Activated naive CD4-positive, alpha-beta T cell treated with anti-CD3 and anti-CD28 coated beads for 36 hours (primary cell): ENCODE measurements at regions of chr7 and their contacts with region 1.

Region 1: DNA sequence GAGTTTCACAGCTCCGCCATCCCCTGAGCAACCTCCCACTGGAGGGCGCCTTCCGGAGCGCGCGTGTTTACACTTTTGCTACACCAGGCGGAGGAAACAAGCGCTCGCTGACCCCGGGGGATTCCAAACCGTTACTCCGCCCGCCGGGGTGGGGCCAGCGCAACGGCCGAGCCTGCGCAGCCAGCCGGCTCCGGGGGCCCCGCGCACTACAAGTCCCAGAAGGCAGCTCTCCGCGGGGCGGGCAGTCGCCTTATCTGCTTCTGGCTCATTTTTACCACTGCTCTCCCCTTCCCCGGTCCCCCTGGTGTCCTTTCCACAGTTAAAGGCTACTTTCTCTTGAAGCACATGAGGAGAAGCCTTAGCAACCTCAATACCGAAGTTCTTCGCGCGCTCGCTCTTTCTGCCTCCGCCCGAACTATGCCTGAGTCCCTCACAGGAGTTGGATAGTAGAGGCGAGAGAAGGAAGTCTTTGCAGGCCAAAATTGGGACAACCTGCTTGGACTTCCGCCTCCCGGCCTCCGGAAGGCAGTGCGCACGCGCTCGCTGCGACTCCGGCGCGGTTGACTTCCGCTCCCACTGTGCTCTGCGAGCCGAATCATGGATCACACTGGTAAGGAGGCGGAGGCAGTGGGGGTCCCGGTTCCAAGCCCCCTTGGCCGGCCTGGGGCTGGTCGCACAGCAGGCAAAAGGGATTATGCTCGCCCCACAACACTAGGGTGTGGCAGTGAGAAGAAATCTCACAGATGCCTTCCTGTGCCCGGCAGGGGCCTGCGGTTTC is at the start of gene CBLL1:
- DNase-seq: peak; percentile 98
- H3K4me3 Mint-ChIP-seq: peak within 1 kb of the TSS; percentile 96
- H3K27ac Mint-ChIP-seq: peak within 1 kb of the TSS; percentile 100
- H3K4me1 Mint-ChIP-seq: peaks cover 42% of the 10 kb centered on the region
- H3K27me3 Mint-ChIP-seq: no peaks in the 10 kb centered on the region
- total RNA-seq, gene CBLL1: 31.6 to 32.1 TPM

Region 2: DNA sequence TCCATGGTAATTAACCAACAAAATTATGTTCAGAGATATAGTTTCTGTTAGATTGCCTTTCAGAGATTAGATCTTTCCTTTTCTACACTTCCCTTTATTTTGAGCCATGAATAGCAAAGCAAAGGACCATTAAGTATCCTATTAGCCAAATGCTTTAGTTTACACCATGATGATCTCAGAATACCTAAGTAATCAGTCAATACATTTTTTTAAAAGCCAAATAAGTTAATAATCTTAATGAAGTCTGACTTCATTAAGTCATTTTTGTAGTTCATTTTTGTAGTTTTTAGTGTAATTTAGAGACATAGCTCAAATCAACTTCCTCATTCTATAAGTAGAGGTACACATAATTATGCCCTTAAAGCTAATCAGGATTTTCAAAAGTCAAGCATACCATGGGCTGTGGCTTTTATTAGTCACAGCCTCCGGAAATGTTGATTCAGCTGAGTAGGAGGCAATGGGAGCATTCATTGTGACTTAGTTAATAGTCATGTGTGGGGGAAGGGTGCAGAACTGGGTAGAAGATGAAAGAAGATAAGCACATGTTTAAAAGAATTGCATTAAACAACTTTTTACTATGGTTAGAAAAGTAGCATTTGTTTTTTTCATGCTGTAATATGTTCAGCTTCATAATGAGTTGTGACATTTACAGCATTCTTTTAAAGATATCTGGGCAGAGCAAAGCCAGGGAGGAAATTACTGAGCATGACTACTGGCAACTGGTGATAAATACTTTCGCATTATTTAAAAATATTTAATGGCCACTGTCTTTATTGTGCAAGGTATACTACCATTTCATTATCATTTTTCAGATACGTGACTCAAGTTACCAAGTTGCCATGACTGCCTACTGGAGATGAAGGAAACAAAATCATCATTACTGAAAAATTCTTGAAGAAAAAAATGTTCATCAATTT is 1025.5 kb before region 1 on chr7:
- CTCF ChIA-PET with region 1: no interaction called
- intact Hi-C with region 1: loop called (anchors 1 kb)
- DNase-seq: peak; percentile 92
- H3K4me3 Mint-ChIP-seq: no peak overlapping the region
- H3K27ac Mint-ChIP-seq: no peak overlapping the region
- H3K4me1 Mint-ChIP-seq: peaks cover 10% of the 10 kb centered on the region
- H3K27me3 Mint-ChIP-seq: no peaks in the 10 kb centered on the region

Region 3: DNA sequence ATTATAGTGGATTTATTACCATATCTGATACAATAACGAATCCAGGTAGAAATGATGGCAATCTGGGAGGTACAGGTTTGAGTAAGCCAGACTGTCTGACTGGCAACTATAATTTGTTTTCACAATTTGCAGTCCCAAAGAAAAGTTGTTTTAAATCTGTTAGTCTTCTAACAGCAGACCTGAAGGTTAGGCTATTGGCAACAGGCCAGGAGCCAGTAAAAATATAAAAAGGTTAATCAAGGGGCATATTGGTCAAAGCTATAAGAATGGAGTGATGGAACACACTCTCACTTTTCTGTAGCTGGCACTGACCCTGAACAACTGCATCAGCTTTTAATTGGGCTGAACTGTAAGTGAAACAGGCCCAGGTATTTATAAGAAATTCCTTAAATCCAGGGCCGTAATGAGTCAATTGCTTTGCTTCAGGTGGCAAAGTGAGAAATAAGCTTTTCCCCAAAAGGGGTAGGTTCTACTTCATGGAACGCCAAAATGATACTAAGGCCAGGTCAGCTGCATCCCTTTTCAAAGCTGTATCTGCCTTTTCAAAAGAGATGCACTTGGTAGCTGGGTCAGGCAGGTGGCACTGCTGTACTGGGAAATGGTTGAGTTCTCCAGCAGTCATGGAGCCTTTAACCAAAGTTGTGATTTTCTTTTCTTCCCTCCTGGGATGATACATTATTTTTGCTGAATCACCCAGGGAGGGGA is 280.9 kb before region 1 on chr7:
- CTCF ChIA-PET with region 1: interaction called, 10 read pairs
- intact Hi-C with region 1: no loop called
- DNase-seq: peak; percentile 64
- H3K4me3 Mint-ChIP-seq: no peak overlapping the region
- H3K27ac Mint-ChIP-seq: no peak overlapping the region
- H3K4me1 Mint-ChIP-seq: no peaks in the 10 kb centered on the region
- H3K27me3 Mint-ChIP-seq: no peaks in the 10 kb centered on the region

Region 4: DNA sequence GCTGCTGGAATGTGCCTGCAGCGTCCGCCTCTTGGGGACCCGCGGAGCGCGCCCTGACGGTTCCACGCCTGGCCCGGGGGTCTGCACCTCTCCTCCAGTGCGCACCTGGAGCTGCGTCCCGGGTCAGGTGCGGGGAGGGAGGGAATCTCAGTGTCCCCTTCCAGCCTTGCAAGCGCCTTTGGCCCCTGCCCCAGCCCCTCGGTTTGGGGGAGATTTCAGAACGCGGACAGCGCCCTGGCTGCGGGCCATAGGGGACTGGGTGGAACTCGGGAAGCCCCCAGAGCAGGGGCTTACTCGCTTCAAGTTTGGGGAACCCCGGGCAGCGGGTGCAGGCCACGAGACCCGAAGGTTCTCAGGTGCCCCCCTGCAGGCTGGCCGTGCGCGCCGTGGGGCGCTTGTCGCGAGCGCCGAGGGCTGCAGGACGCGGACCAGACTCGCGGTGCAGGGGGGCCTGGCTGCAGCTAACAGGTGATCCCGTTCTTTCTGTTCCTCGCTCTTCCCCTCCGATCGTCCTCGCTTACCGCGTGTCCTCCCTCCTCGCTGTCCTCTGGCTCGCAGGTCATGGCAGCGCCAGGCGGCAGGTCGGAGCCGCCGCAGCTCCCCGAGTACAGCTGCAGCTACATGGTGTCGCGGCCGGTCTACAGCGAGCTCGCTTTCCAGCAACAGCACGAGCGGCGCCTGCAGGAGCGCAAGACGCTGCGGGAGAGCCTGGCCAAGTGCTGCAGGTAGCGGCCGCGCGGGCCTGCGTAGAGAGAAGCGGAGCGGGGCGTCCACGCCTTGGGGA is 82.5 kb before region 1 on chr7:
- CTCF ChIA-PET with region 1: no interaction called
- intact Hi-C with region 1: loop called (anchors 1 kb)
- DNase-seq: peak; percentile 69
- H3K4me3 Mint-ChIP-seq: peak overlapping the region; percentile 86
- H3K27ac Mint-ChIP-seq: no peak overlapping the region
- H3K4me1 Mint-ChIP-seq: peaks cover 26% of the 10 kb centered on the region
- H3K27me3 Mint-ChIP-seq: peaks cover 31% of the 10 kb centered on the region

Region 5: DNA sequence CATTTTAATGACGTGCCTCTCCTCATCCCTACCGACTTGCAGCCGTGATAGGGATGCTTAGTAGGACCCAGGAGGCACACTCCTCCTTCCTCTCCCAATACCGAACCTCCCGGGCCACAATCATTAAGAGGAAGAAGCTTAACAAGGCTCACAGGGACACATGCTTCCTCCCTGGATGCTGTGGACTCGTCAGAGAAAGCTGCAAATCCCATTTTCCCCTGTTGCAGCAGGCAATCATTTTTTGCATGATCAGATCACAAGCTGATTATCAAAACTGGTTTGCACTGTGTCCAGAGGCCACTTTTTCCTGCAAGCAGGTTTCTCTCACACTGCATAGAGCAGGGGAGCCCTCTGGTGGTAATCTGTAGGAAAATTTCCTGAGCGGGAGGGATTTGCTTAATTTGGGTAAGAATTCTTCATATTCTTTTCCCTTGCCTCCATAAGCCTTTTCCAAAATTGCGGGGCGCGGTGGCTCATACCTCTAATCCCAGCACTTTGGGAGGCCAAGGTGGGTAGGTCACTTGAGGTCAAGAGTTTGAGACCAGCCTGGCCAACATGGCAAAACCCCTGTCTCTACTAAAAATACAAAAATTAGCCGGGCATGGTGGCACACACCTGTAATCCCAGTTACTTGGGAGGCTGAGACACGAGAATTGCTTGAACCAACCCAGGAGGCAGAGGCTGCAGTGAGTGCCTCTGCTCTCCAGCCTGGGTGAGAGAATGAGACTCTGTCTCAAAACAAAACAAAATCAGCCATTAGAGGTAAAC is 402.5 kb after region 1 on chr7:
- CTCF ChIA-PET with region 1: interaction called, 6 read pairs
- intact Hi-C with region 1: loop called (anchors 5 kb)
- DNase-seq: peak; percentile 64
- H3K4me3 Mint-ChIP-seq: no peak overlapping the region
- H3K27ac Mint-ChIP-seq: no peak overlapping the region
- H3K4me1 Mint-ChIP-seq: no peaks in the 10 kb centered on the region
- H3K27me3 Mint-ChIP-seq: no peaks in the 10 kb centered on the region